ENCODE measurements at regions of chr3 and their contacts with region 1.

Region 1: DNA sequence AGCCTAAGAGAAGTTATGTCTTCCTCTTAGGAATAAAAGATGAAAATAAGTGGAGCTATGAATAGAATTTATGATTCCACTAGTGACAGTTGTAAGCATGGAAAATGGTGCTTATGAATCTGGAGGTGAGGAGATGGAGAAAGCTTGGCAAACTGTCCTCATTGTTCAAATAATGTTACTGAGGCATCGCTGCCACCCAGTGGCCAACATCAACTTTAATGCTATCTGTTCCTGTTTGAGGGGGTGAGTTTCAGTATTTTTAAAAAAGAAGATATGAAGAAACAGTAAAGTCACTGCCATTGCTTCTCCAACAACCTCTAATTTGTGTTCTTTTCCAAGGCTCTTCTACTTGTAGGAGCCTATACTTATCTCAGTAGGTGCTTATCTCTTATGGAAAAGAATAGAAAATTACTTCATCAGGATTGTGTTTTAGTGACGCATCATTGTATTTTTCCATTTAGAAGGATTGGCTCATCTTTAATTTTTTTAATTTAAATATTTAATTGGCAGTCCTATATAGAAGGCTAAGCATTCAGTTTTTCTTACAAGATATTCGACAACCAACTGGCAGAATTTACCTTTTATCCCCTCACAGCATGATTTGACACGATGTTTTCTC is 260.4 kb upstream of the P2RY1 start:
- DNase-seq: peak in 6 of 9 donors; percentile 9 to 30 (median 16)
- ATAC-seq: no peak
- H3K4me3 ChIP-seq: no peak overlapping the region
- H3K4me3 Mint-ChIP-seq: no peak overlapping the region
- H3K27ac ChIP-seq: no peak overlapping the region
- H3K27ac Mint-ChIP-seq: no peak overlapping the region
- H3K4me1 ChIP-seq: no peaks in the 10 kb centered on the region
- H3K4me1 Mint-ChIP-seq: no peaks in the 10 kb centered on the region
- H3K27me3 ChIP-seq: no peaks in the 10 kb centered on the region
- H3K27me3 Mint-ChIP-seq: peaks cover 0 to 43% (median 10%) of the 10 kb centered on the region in 5 donors

Region 2: DNA sequence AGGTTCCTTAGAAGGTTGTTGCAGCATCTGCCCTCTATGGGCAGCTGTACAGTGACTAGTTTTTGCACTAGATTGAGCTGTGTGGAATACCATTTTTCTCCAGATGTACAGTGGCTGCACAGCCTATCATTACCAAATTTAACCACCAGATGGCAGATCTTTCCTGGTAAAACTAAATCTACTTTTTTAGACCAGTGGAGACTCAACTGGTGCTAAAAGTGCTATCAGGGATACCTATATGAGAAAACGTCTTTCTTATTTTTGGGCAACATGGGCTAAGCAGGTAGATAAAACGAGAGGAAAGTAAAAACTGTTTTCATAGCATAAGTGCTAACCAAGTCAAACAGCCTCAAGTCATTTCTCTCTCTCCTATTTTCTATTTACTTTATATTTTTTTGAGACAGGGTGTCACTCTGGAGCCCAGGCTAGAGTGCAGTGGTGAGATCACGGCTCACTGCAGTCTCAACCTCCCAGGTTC is 1134.9 kb before region 1 on chr3:
- CTCF ChIA-PET with region 1: interaction called, 3 read pairs
- POLR2A ChIA-PET with region 1: no interaction called
- intact Hi-C with region 1: loop called in 1 of 2 experiments (anchors 1 kb)
- DNase-seq: peak in 6 of 9 donors; percentile 18 to 33 (median 24)
- ATAC-seq: peak; percentile 65
- H3K4me3 ChIP-seq: no peak overlapping the region
- H3K4me3 Mint-ChIP-seq: no peak overlapping the region
- H3K27ac ChIP-seq: no peak overlapping the region
- H3K27ac Mint-ChIP-seq: no peak overlapping the region
- H3K4me1 ChIP-seq: no peaks in the 10 kb centered on the region
- H3K4me1 Mint-ChIP-seq: no peaks in the 10 kb centered on the region
- H3K27me3 ChIP-seq: no peaks in the 10 kb centered on the region
- H3K27me3 Mint-ChIP-seq: peaks cover 0 to 9% (median 0%) of the 10 kb centered on the region in 5 donors

Region 3: DNA sequence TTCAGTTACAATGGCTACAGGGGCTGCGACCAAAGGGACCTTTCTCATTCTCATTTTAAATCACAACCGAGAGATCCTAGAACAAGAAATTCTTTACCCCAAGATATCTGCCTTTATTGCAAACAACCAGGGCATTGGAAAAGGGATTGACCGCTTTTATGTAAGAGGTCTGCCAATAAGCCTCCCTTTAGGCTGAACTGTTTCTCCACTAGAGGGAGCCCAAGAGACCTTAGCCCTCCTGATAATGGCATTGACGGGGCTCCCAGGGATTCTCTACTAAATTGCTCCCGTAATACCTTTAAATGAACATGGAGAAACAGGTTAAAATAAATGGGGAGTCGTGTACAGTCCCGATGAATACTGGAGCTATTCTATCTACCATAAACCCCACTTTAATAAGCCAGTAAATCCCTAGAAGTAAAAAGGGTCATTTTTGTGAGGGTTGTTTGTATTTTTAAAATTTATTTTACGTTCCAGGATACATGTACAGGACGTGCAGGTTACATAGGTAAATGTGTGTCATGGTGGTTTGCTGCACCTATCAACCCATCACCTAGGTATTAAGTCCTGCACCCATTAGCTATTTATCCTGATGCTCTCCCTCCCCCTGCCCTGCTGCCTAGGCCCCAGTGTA is 1106.2 kb before region 1 on chr3:
- CTCF ChIA-PET with region 1: interaction called, 5 read pairs
- POLR2A ChIA-PET with region 1: no interaction called
- intact Hi-C with region 1: loop called in 1 of 2 experiments (anchors 1 kb)
- DNase-seq: peak in 7 of 9 donors; percentile 14 to 64 (median 31)
- ATAC-seq: peak; percentile 67
- H3K4me3 ChIP-seq: no peak overlapping the region
- H3K4me3 Mint-ChIP-seq: no peak overlapping the region
- H3K27ac ChIP-seq: no peak overlapping the region
- H3K27ac Mint-ChIP-seq: no peak overlapping the region
- H3K4me1 ChIP-seq: no peaks in the 10 kb centered on the region
- H3K4me1 Mint-ChIP-seq: no peaks in the 10 kb centered on the region
- H3K27me3 ChIP-seq: no peaks in the 10 kb centered on the region
- H3K27me3 Mint-ChIP-seq: peaks cover 10 to 22% (median 12%) of the 10 kb centered on the region in 5 donors

Region 4: DNA sequence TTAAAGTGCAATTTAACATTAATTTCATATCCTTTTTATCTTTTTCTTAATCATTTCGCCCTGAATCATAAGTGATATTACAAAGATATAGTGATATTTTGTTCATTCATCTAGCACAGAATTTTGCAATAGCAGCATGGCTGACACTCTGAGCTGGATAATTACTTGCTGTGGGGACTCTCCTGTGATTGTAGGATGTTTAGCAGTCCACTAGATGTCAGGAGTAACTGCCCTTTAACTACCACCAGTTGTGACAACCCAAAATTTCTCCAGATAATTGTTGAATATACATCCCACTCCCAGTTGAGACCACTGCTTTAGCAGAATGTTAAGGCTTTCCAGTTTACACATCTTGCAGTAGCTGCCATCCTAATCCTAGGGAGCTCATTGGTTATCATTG is 502.6 kb before region 1 on chr3:
- CTCF ChIA-PET with region 1: interaction called, 3 read pairs
- POLR2A ChIA-PET with region 1: no interaction called
- intact Hi-C with region 1: loop called in 1 of 2 experiments (anchors 1 kb)
- DNase-seq: peak in 6 of 9 donors; percentile 10 to 43 (median 32)
- ATAC-seq: peak; percentile 75
- H3K4me3 ChIP-seq: no peak overlapping the region
- H3K4me3 Mint-ChIP-seq: no peak overlapping the region
- H3K27ac ChIP-seq: no peak overlapping the region
- H3K27ac Mint-ChIP-seq: no peak overlapping the region
- H3K4me1 ChIP-seq: peaks cover 0 to 5% of the 10 kb centered on the region in 2 donors
- H3K4me1 Mint-ChIP-seq: peaks cover 0 to 6% (median 3%) of the 10 kb centered on the region in 7 donors
- H3K27me3 ChIP-seq: no peaks in the 10 kb centered on the region
- H3K27me3 Mint-ChIP-seq: peaks cover 0 to 6% (median 0%) of the 10 kb centered on the region in 5 donors

Measured in naive thymus-derived CD4-positive, alpha-beta T cell (primary cell).